OCI-LY7 (cell line): ENCODE measurements at regions of chr16 and their contacts with region 1.

Region 1: DNA sequence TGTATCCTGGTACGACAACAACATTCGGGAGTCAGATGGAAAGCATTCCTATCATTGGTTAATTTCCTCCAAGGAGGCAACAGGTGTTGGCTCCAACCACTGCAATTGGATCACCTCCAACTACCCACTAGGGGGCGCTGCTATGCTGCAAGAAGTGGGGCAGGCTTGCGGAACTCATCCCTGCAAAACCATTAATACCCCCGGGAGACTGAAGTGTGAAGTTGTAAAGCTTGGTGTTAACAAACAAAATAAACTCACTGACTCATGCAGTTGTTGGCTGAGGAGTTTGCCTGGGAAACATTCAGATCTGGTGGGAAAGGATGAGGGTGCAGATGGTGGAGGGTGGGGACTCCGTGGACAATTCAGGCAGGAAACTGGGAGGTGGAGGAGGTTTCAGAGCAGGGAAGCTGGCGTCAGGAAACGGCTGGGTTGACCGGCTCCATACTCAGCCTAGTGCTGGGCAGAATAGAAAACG is 84.9 kb downstream of the HS3ST2 start:
- DNase-seq: peak; percentile 63
- H3K4me3 ChIP-seq: no peak overlapping the region
- H3K27ac ChIP-seq: no peak overlapping the region
- H3K4me1 ChIP-seq: no peaks in the 10 kb centered on the region
- CTCF ChIP-seq: peak; percentile 95

Region 2: GRCh38 chr16:22797551-22797950 is 101.4 kb before region 1 on chr16:
- CTCF ChIA-PET with region 1: no interaction called
- POLR2A ChIA-PET with region 1: no interaction called
- intact Hi-C with region 1: no loop called
- DNase-seq: no peak
- H3K4me3 ChIP-seq: no peak overlapping the region
- H3K27ac ChIP-seq: no peak overlapping the region
- H3K4me1 ChIP-seq: no peaks in the 10 kb centered on the region
- CTCF ChIP-seq: no peak

Region 3: DNA sequence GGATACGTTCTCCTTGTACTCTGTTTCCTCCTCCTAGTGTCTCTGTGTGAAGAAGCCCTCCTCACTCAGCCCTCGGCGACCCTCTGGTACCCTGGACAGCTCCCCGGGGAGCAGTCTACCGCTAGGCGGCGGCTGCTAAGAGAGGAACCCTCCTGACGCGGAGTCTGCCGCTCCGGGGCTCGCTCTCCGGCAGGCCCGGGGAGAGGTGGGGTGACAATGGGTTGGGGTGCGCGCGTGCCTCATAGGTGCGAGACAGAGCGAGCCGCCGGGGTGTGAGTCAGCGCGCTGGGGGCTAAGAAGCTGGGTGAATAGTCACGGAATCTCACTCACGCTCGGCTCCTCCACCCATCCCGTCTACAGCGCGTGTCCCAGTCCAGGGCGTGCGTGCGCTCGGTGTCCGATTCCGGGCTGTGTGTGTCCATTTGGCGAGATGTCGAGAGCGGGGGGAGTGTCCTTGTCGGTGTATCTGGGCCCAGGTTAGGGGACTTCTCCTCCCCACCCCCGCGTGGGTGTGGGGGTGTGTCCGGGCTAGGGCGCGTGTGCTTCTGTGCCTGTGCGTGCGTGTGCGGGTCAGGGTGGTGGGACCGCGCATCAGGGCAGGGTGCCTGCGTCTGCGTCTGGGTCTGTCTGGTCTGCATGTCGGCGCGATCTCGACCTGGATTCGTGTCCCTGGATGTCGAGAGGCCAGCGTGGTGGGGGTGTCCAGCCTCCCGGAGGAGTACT is 85.5 kb before region 1 on chr16:
- CTCF ChIA-PET with region 1: no interaction called
- POLR2A ChIA-PET with region 1: no interaction called
- intact Hi-C with region 1: no loop called
- DNase-seq: no peak
- H3K4me3 ChIP-seq: no peak overlapping the region
- H3K27ac ChIP-seq: no peak overlapping the region
- H3K4me1 ChIP-seq: no peaks in the 10 kb centered on the region
- CTCF ChIP-seq: no peak

Region 4: DNA sequence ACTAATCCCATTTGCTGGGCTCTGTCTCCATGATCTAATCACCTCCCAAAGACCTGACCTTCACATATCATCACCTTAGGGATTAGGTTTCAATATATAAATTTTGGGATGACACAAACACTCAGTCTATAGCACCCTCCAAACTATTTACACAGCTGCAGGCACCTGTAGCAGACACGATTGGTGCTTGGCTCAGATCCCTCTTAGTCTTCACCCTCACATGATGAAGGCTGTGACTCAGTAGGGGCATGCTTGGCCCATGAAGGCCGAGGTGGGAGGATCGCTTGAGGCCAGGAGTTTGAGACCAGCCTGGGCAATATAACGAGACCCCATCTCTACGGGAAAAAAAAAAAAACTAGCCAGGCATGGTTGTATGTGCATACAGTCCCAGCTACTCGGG is 11.5 kb before region 1 on chr16:
- CTCF ChIA-PET with region 1: no interaction called
- POLR2A ChIA-PET with region 1: no interaction called
- intact Hi-C with region 1: no loop called
- DNase-seq: no peak
- H3K4me3 ChIP-seq: no peak overlapping the region
- H3K27ac ChIP-seq: no peak overlapping the region
- H3K4me1 ChIP-seq: no peaks in the 10 kb centered on the region
- CTCF ChIP-seq: no peak

Region 5: GRCh38 chr16:22948603-22949368 is 49.9 kb after region 1 on chr16:
- CTCF ChIA-PET with region 1: interaction called, 3 read pairs
- POLR2A ChIA-PET with region 1: no interaction called
- intact Hi-C with region 1: loop called (anchors 1 kb)
- DNase-seq: peak; percentile 65
- H3K4me3 ChIP-seq: no peak overlapping the region
- H3K27ac ChIP-seq: no peak overlapping the region
- H3K4me1 ChIP-seq: no peaks in the 10 kb centered on the region
- CTCF ChIP-seq: peak; percentile 92

Region 6: GRCh38 chr16:22977294-22977697 is 78.4 kb after region 1 on chr16:
- CTCF ChIA-PET with region 1: no interaction called
- POLR2A ChIA-PET with region 1: no interaction called
- intact Hi-C with region 1: loop called (anchors 2 kb)
- DNase-seq: peak; percentile 20
- H3K4me3 ChIP-seq: no peak overlapping the region
- H3K27ac ChIP-seq: no peak overlapping the region
- H3K4me1 ChIP-seq: no peaks in the 10 kb centered on the region
- CTCF ChIP-seq: peak; percentile 71